ENCODE measurements at regions of chr18 and their contacts with region 1.

Region 1: GRCh38 chr18:60372596-60372995 is at the start of gene MC4R:
- DNase-seq: no peak
- ATAC-seq: no peak
- H3K4me3 ChIP-seq: no peak within 1 kb of the TSS
- H3K4me3 Mint-ChIP-seq: no peak within 1 kb of the TSS
- H3K27ac ChIP-seq: no peak within 1 kb of the TSS
- H3K27ac Mint-ChIP-seq: no peak within 1 kb of the TSS
- H3K4me1 ChIP-seq: no peaks in the 10 kb centered on the region
- H3K4me1 Mint-ChIP-seq: no peaks in the 10 kb centered on the region
- H3K27me3 ChIP-seq: no peaks in the 10 kb centered on the region
- H3K27me3 Mint-ChIP-seq: no peaks in the 10 kb centered on the region
- CTCF ChIP-seq: no peak
- total RNA-seq, gene MC4R: not detected

Region 2: DNA sequence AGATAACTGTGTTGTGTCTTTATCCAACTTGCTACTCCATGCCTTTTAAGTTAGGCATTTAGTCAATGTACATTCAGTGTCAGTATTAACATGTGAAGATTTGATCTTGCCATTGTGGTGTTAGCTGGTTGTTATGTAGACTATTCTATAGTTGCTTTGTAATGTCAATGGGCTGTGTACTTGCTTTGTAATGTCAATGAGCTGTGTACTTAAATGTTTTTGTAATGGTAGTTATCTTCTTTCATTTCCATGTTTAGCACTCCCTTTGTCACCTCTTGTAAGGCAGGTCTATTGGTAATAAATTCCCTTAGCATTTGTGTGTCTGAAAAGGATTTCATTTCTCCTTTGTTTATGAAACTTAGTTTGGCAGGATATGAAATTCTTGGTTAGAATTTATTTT is 53.5 kb before region 1 on chr18:
- CTCF ChIA-PET with region 1: no interaction called
- POLR2A ChIA-PET with region 1: no interaction called
- intact Hi-C with region 1: loop called in 1 of 2 experiments (anchors 5 kb)
- DNase-seq: no peak
- ATAC-seq: no peak
- H3K4me3 ChIP-seq: no peak overlapping the region
- H3K4me3 Mint-ChIP-seq: no peak overlapping the region
- H3K27ac ChIP-seq: no peak overlapping the region
- H3K27ac Mint-ChIP-seq: no peak overlapping the region
- H3K4me1 ChIP-seq: no peaks in the 10 kb centered on the region
- H3K4me1 Mint-ChIP-seq: no peaks in the 10 kb centered on the region
- H3K27me3 ChIP-seq: no peaks in the 10 kb centered on the region
- H3K27me3 Mint-ChIP-seq: no peaks in the 10 kb centered on the region
- CTCF ChIP-seq: no peak

Region 3: GRCh38 chr18:60413944-60414547 is 41.5 kb after region 1 on chr18:
- CTCF ChIA-PET with region 1: no interaction called
- POLR2A ChIA-PET with region 1: no interaction called
- intact Hi-C with region 1: no loop called
- DNase-seq: no peak
- ATAC-seq: no peak
- H3K4me3 ChIP-seq: no peak overlapping the region
- H3K4me3 Mint-ChIP-seq: no peak overlapping the region
- H3K27ac ChIP-seq: no peak overlapping the region
- H3K27ac Mint-ChIP-seq: no peak overlapping the region
- H3K4me1 ChIP-seq: no peaks in the 10 kb centered on the region
- H3K4me1 Mint-ChIP-seq: no peaks in the 10 kb centered on the region
- H3K27me3 ChIP-seq: no peaks in the 10 kb centered on the region
- H3K27me3 Mint-ChIP-seq: no peaks in the 10 kb centered on the region
- CTCF ChIP-seq: no peak